CD8-positive, alpha-beta T cell (primary cell): ENCODE measurements at regions of chrX and their contacts with region 1.

Region 1: DNA sequence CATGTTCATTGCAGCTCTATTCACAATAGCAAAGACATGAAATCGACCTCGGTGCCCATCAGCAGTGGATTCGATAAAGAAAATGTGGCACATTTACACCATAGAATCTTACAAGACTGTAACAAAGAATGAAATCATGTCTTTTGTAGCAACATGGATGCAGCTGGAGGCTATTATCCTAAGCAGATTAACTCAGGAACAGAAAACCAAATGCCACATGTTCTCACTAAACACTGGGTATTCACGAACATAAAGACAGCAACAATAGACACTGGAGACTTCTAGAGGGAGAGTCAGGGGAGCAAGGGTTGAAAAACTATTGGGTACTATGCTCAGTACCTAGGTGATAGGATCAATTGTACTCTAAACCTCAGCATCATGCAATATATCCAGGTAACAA is 180.5 kb downstream of the PPP1R2C start:
- DNase-seq: no peak
- ATAC-seq: no peak
- H3K4me3 ChIP-seq: no peak overlapping the region
- H3K4me3 Mint-ChIP-seq: no peak overlapping the region
- H3K27ac ChIP-seq: no peak overlapping the region
- H3K27ac Mint-ChIP-seq: no peak overlapping the region
- H3K4me1 ChIP-seq: no peaks in the 10 kb centered on the region
- H3K4me1 Mint-ChIP-seq: no peaks in the 10 kb centered on the region
- H3K27me3 ChIP-seq: no peaks in the 10 kb centered on the region
- H3K27me3 Mint-ChIP-seq: no peaks in the 10 kb centered on the region
- CTCF ChIP-seq: no peak

Region 2: GRCh38 chrX:42673301-42673810 is 75.9 kb after region 1 on chrX:
- CTCF ChIA-PET with region 1: no interaction called
- POLR2A ChIA-PET with region 1: no interaction called
- intact Hi-C with region 1: loop called in 1 of 2 experiments (anchors 5 kb)
- DNase-seq: no peak
- ATAC-seq: no peak
- H3K4me3 ChIP-seq: no peak overlapping the region
- H3K4me3 Mint-ChIP-seq: no peak overlapping the region
- H3K27ac ChIP-seq: no peak overlapping the region
- H3K27ac Mint-ChIP-seq: no peak overlapping the region
- H3K4me1 ChIP-seq: no peaks in the 10 kb centered on the region
- H3K4me1 Mint-ChIP-seq: no peaks in the 10 kb centered on the region
- H3K27me3 ChIP-seq: no peaks in the 10 kb centered on the region
- H3K27me3 Mint-ChIP-seq: no peaks in the 10 kb centered on the region
- CTCF ChIP-seq: no peak